ENCODE measurements at regions of chr1 and their contacts with region 1.

Region 1: DNA sequence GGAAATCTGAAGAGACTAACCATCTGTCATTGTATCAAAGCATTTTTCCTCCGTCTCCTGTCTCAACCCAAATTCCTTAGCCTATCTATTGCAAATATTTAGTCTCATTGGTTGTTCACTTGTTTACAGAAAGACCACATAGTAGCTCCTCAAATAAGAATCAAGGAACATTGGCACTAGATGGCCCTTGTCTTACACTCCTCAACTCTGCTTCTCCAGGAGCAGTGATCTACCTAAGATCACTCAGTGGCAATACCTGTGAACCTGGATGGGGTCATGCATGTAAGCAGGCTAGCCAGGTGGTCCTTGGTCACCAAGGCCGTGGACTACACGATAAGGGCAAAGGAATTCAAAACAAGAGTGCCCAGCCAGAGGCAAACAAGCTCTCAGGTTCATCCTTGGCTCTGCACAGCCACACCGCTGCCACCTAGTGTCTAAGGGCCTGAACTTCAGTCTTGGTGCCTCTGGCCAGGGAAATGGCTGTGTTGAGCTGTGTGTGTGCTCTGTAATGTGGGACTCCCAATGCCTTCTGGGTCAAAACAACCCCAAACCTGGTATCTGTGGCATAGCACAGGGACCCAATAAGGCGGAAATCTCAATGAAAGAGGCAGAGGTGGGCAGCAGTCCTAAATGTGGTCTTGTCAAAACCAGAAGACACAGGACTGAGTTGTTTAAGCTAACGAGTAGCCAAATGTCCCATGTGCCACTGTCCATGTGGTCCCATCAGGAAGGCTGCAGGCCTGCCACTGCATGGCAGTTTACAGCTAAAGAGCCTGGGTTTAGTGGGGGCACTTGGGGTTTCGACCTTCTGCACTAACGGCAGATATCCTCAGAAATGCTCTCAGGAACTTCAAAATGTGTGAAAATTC is 54.5 kb downstream of the GPR161 start:
- DNase-seq: peak; percentile 56 to 70
- ATAC-seq: peak; percentile 83

Region 2: DNA sequence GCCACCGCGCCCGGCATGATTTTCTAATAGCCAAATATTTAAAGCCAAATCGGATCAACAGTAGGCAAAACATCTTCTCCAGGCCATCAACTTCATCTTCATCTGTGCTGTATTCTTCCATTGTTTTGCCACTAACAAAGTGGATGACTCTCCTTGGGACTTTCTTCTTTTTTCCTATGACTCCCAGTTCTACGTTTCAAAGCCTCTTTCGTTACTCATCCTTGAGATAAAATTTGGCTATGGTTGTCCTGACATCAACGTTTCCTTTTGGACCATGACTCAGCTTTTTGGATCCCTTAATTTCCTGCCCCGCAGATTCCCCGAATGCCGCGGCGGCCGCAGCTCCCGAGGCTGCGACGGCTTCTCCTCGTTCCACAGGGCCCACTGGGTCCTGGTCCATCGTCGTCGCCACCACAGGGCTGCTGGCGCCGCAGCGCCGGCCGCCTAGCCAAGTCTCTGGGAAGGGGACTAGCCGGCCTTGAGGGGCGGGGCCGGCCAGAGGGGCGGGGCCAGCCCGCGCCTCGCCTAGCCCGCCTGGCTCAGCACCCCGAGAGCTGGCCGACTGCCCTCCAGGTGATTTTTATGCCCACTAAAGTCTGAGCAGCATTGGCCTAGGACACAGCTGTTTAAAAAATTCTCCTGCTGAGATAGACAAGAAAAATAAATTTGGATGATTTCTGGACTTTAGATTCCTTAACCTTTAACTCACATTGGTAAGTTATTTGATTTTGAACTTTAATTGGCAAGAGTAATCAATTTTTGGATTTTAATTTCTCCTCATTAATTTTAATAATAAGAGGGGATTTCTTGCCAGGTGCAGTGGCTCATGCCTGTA is 262.2 kb before region 1 on chr1:
- intact Hi-C with region 1: loop called in 1 of 2 experiments (anchors 10 kb)
- DNase-seq: peak; percentile 64 to 75
- ATAC-seq: peak; percentile 78

Measured in left colon (tissue), 2 donors.